ENCODE measurements at regions of chr3 and their contacts with region 1.

Region 1: GRCh38 chr3:119676771-119677640 is at the start of gene COX17:
- DNase-seq: peak; percentile 97
- H3K4me3 ChIP-seq: peak within 1 kb of the TSS; percentile 52
- H3K27ac ChIP-seq: peak within 1 kb of the TSS; percentile 72
- H3K4me1 ChIP-seq: peaks cover 11% of the 10 kb centered on the region
- H3K27me3 ChIP-seq: no peaks in the 10 kb centered on the region
- CTCF ChIP-seq: no peak
- total RNA-seq, gene COX17: 42.6 and 49.7 TPM in 2 replicates

Region 2: DNA sequence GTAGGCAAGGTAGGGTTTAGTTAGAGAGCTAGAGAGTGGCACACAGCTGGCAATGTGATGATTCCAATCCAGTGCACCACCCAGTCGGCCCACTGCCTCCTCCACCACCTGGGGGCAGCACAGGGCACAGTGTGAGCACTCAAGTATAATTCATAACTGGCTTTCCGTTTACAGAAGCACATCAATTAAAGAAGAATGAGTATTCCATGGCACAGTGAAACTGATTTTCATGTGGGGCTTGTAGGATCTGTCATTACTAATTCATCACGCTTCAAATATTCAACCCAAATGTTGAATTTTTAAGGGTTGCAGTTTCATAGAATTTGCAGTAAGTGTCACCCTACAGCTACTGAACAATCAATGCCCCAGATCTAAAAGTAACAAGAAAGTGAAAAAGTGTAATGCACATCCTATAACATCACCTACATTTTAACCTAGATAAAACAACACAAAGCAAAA is 792.2 kb before region 1 on chr3:
- CTCF ChIA-PET with region 1: no interaction called
- POLR2A ChIA-PET with region 1: no interaction called
- intact Hi-C with region 1: loop called (anchors 2 kb)
- DNase-seq: peak; percentile 66
- H3K4me3 ChIP-seq: no peak overlapping the region
- H3K27ac ChIP-seq: no peak overlapping the region
- H3K4me1 ChIP-seq: no peaks in the 10 kb centered on the region
- H3K27me3 ChIP-seq: peaks cover 14% of the 10 kb centered on the region
- CTCF ChIP-seq: peak; percentile 95

Region 3: DNA sequence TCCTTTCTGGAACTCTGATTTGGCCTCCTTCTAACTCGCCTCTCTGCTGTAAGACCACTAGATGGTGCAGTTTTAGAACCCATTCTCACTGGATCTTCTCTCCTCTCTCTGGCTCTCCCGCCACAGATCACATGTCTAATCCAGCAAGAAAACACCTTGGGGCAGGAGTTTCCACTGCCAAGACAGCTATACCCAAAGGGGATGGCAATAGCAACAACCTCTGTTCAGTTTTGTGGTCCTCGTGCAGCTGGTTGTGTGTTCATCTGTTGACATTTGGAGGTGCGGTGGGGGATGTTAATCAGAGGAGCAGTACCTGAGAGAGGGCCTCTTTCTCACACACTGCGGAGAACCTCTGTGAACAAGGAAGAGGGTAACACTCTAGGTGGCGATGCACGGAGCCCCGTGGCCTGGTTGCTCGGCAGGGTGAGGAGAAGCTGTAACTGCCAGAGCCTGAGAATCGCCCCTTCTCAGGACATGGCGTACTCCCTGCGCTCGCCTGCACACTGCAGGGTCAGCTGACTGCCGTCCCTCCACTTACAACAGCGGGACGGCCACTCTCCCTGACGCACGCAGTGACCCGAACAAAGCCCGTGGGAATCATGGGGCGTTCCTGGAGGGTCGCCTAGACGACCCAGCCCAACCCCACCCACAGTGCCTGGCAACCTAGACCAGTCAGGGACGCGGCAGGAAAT is 531.4 kb before region 1 on chr3 and contains the start of gene TEX55:
- CTCF ChIA-PET with region 1: no interaction called
- POLR2A ChIA-PET with region 1: no interaction called
- intact Hi-C with region 1: loop called (anchors 2 kb)
- DNase-seq: peak; percentile 66
- H3K4me3 ChIP-seq: no peak within 1 kb of the TSS
- H3K27ac ChIP-seq: no peak within 1 kb of the TSS
- H3K4me1 ChIP-seq: no peaks in the 10 kb centered on the region
- H3K27me3 ChIP-seq: no peaks in the 10 kb centered on the region
- CTCF ChIP-seq: peak; percentile 72
- total RNA-seq, gene TEX55: not detected in 2 replicates

Region 4: GRCh38 chr3:119279101-119279554 is 397.9 kb before region 1 on chr3:
- CTCF ChIA-PET with region 1: no interaction called
- POLR2A ChIA-PET with region 1: no interaction called
- intact Hi-C with region 1: loop called (anchors 5 kb)
- DNase-seq: no peak
- H3K4me3 ChIP-seq: no peak overlapping the region
- H3K27ac ChIP-seq: no peak overlapping the region
- H3K4me1 ChIP-seq: no peaks in the 10 kb centered on the region
- H3K27me3 ChIP-seq: no peaks in the 10 kb centered on the region
- CTCF ChIP-seq: no peak

Region 5: GRCh38 chr3:119420196-119420595 is 256.8 kb before region 1 on chr3:
- CTCF ChIA-PET with region 1: no interaction called
- POLR2A ChIA-PET with region 1: interaction called, 3 read pairs
- intact Hi-C with region 1: loop called (anchors 2 kb)
- DNase-seq: peak; percentile 23
- H3K4me3 ChIP-seq: no peak overlapping the region
- H3K27ac ChIP-seq: no peak overlapping the region
- H3K4me1 ChIP-seq: no peaks in the 10 kb centered on the region
- H3K27me3 ChIP-seq: peaks cover 7% of the 10 kb centered on the region
- CTCF ChIP-seq: peak; percentile 51

Region 6: GRCh38 chr3:119600732-119601131 is 76.3 kb before region 1 on chr3:
- CTCF ChIA-PET with region 1: interaction called, 4 read pairs
- POLR2A ChIA-PET with region 1: no interaction called
- intact Hi-C with region 1: loop called (anchors 2 kb)
- DNase-seq: peak; percentile 58
- H3K4me3 ChIP-seq: no peak overlapping the region
- H3K27ac ChIP-seq: no peak overlapping the region
- H3K4me1 ChIP-seq: no peaks in the 10 kb centered on the region
- H3K27me3 ChIP-seq: no peaks in the 10 kb centered on the region
- CTCF ChIP-seq: peak; percentile 72

Region 7: DNA sequence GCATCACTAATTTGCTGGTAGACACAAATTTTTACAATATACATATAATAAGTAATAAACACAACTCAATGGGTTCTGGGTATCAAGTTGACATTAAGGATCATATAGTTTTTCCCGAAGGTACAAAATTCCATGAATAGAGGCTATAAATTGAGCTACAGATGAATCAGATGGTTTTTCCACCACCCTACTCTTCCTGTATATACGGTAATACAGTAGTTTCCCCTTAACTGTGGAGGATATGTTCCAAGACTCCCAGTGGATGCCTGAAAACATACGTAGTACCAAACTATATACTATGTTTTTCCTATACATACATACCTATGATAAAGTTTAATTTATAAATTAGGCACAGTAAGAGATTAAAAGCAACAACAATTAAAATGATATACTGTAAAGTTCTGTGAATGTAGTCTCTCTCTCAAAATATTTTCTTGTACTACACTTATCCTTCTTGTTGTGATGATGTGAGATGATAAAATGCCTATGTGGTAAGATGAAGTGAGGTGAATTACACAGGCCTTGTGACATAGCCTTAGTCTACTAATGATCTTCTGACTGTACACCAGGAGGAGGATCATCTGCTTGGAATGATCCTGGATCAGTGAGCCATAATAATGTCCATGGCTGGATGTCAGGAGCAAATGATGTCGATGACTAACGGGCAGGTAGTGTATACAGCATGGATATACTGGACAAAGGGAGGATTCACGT is 221.6 kb after region 1 on chr3:
- CTCF ChIA-PET with region 1: no interaction called
- POLR2A ChIA-PET with region 1: no interaction called
- intact Hi-C with region 1: no loop called
- DNase-seq: no peak
- H3K4me3 ChIP-seq: no peak overlapping the region
- H3K27ac ChIP-seq: no peak overlapping the region
- H3K4me1 ChIP-seq: no peaks in the 10 kb centered on the region
- H3K27me3 ChIP-seq: no peaks in the 10 kb centered on the region
- CTCF ChIP-seq: no peak

Region 8: GRCh38 chr3:120095226-120095978 is 418.4 kb after region 1 on chr3:
- CTCF ChIA-PET with region 1: interaction called, 3 read pairs
- POLR2A ChIA-PET with region 1: no interaction called
- intact Hi-C with region 1: loop called (anchors 10 kb)
- DNase-seq: peak; percentile 94
- H3K4me3 ChIP-seq: peak overlapping the region; percentile 81
- H3K27ac ChIP-seq: peak overlapping the region; percentile 99
- H3K4me1 ChIP-seq: peaks cover 7% of the 10 kb centered on the region
- H3K27me3 ChIP-seq: no peaks in the 10 kb centered on the region
- CTCF ChIP-seq: no peak